ENCODE measurements at regions of chr6 and their contacts with region 1.

Region 1: DNA sequence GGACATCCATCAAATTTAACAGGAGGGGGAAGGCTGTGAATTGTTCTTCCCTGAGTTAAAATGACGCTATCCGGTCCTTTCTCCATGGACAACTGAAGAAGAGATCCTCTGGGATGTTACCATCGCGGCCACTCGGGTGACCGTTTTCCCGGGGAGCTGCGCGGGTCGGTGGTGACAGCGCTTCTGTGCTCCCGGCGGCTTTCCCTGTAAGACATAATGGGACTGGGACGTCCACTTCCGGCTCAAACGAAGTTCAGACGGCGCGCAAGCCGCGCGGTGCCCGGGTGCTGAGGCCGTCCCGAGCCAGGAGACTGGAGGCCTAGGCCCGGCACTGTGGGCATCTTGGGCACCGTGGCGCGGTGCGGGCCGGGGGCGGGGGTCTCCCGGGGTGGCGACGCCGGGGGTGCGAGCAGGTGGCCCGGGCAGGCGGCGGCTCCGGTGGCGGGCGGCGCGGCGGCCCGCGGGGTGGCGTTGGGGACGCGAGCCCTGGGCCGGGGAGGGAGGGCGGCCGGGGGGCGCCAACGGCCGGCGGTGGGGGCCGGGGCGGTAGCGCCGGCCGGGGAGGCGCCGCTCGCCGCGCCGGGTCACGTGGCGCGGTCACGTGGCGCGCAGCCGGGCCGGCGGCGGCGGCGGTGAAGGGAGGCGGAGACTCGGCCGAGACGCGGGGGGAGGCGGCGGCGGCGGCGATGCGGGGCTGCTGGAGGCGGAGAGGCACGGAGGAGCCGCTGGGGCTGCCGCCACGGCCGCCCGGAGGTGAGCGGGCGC is 63.6 kb downstream of the GTF2H5 start:
- DNase-seq: peak; percentile 63 to 81
- ATAC-seq: peak; percentile 64 to 84 (median 70)
- H3K4me3 ChIP-seq: peak overlapping the region; percentile 36 to 84 (median 80)
- H3K27ac ChIP-seq: peak overlapping the region; percentile 72 to 92 (median 84)
- H3K4me1 ChIP-seq: peaks cover 7 to 29% (median 15%) of the 10 kb centered on the region in 9 donors
- H3K27me3 ChIP-seq: peaks cover 0 to 7% (median 0%) of the 10 kb centered on the region in 7 donors
- CTCF ChIP-seq: no peak

Region 2: DNA sequence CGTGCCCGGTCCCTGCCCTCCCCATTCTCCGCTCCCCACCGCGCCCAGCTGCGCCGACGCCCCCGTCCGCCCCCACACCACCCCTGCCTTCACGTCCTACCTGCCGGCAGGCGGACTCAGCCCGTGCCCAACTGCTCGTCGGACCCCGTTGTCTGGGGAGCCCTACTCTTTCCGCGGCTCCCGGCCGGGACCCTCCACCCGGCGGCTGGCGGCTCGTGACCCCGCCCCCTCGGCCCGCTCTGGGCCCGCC is 63.8 kb before region 1 on chr6 and contains the start of gene SERAC1:
- intact Hi-C with region 1: no loop called
- DNase-seq: no peak
- ATAC-seq: peak in 7 of 8 donors; percentile 72 to 91 (median 77)
- H3K4me3 ChIP-seq: peak within 1 kb of the TSS; percentile 65 to 98 (median 82)
- H3K27ac ChIP-seq: peak within 1 kb of the TSS; percentile 81 to 100 (median 98)
- H3K4me1 ChIP-seq: peaks cover 0 to 23% (median 11%) of the 10 kb centered on the region in 9 donors
- H3K27me3 ChIP-seq: no peaks in the 10 kb centered on the region
- CTCF ChIP-seq: no peak
- total RNA-seq, gene SERAC1: 4.0 to 6.0 (median 4.9) TPM

Region 3: DNA sequence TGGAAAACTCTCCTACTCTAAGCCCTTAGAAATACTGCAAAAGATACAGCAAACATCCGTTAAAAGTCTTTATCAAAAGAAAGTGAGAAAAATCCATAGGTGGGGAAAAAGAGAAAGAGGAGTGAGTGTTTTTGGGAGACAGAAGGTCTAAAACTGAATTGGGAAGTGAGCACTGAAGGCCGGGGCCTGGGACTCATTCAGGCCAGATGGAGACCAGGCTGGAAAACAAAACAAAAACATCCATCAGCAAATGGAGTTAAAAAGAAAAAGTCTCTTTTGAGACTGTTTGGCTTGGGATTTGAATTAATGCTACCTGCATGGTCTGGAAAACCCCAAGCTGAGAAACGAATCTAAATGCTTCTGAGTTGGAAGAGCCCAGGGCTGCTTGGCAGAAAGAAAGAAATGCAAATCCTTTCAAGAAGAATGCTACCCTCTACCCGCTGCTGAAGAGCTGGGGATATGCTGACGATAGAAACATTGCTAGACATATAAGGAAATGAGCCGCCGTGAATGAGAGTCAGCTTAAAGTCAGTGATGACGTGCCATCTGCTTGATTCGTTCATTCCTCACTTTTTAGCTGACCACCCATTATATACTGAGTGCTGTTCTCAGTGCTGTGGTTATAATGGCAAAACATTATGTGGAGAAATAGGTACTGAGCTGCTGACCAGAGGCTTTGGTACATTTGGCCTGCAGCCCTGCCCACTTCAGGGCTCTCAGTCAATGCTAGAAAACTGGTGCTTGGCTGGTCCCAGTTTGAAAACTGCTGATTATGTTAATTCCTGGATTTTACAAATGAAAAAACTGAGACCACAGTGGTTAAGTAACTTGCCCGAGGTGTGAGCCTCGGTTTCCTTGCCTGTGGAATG is 52.5 kb after region 1 on chr6:
- intact Hi-C with region 1: loop called in 1 of 10 experiments (anchors 5 kb)
- DNase-seq: no peak
- ATAC-seq: peak in 6 of 8 donors; percentile 29 to 79 (median 37)
- H3K4me3 ChIP-seq: peak overlapping the region in 1 of 10 donors; percentile 9
- H3K27ac ChIP-seq: peak overlapping the region in 6 of 10 donors; percentile 18 to 75 (median 50)
- H3K4me1 ChIP-seq: peaks cover 8 to 52% (median 43%) of the 10 kb centered on the region in 9 donors
- H3K27me3 ChIP-seq: no peaks in the 10 kb centered on the region
- CTCF ChIP-seq: no peak

Region 4: DNA sequence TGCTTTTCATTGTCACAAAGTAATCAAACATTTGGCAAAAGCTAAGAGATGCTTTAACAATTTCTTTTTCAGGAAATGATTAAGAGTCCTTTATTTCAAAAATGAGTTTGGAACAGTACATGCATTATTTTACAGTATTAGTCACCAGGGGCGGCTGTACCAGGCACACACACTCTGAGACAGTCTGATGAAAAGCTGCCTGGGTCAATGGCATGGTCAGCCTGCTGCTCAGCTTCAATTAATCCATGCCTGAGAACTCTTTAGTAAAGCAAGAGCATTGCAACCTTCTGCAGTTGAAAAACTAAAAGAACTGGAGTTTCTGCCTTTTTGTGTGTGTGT is 186.0 kb after region 1 on chr6:
- intact Hi-C with region 1: loop called in 1 of 10 experiments (anchors 10 kb)
- DNase-seq: no peak
- ATAC-seq: no peak
- H3K4me3 ChIP-seq: no peak overlapping the region
- H3K27ac ChIP-seq: no peak overlapping the region
- H3K4me1 ChIP-seq: peaks cover 0 to 12% (median 0%) of the 10 kb centered on the region in 9 donors
- H3K27me3 ChIP-seq: no peaks in the 10 kb centered on the region
- CTCF ChIP-seq: no peak

Measured in heart right ventricle (tissue), 16 donors.